WTC11 (cell line): ENCODE measurements at regions of chr16 and their contacts with region 1.

Region 1: GRCh38 chr16:56317998-56318826 is 107.1 kb downstream of the AMFR start:
- DNase-seq: peak; percentile 88
- ATAC-seq: peak; percentile 98
- H3K4me3 Mint-ChIP-seq: peak overlapping the region; percentile 64
- H3K27ac Mint-ChIP-seq: no peak overlapping the region
- H3K4me1 Mint-ChIP-seq: peaks cover 5% of the 10 kb centered on the region
- H3K27me3 Mint-ChIP-seq: peaks cover 9% of the 10 kb centered on the region
- CTCF ChIP-seq: peak; percentile 96

Region 2: GRCh38 chr16:55944377-55944802 is 373.8 kb before region 1 on chr16:
- CTCF ChIA-PET with region 1: interaction called, 10 read pairs
- POLR2A ChIA-PET with region 1: no interaction called
- DNase-seq: peak; percentile 80
- ATAC-seq: peak; percentile 97
- H3K4me3 Mint-ChIP-seq: no peak overlapping the region
- H3K27ac Mint-ChIP-seq: no peak overlapping the region
- H3K4me1 Mint-ChIP-seq: peaks cover 22% of the 10 kb centered on the region
- H3K27me3 Mint-ChIP-seq: no peaks in the 10 kb centered on the region; the same call in none of the 2 replicates
- CTCF ChIP-seq: peak; percentile 88

Region 3: DNA sequence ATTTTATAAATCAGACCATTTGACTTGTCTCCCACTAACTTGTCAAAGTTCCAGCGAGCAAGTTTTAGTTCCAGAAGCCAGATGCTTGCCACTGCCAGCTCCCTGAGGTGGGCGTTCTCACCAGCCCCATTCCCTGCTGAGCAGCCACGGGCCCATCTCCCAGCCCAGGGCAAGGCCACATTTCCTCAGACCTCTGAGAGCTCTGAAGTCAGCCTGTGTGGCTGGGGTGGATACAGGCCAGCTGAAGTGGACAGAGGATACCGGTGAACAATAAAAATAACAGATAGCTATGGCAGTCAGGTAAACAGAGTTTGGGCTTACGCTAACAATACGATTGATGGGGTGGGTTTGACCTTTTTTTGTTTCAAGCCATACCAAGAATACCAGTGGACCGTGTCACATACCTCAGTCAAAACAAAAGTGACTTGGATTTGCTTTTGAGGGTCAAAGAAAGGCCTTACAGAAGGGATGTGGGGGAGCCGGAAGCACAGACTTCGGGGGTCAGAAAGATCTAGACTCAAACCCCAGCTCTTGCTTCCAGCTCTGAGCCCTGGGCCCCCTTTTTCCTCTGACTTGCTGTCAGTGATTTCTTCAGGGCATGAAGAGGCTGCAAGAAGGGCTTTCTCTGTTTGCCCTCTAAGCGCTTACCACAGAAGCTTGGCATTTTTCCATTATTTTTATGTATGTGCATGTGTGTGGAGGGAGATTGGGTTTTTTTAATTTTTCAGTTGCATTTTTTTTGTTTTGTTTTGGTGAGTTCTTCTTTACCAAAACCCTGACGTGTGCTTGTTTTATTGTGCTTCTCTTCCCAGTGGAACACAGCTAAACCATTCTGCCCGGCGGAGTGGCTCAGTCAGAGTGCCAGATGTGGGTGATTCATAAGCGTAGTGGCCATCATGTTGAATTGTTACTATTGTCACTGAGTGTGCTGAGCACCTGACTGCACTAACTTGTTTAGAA is 17.0 kb before region 1 on chr16:
- CTCF ChIA-PET with region 1: interaction called, 33 read pairs
- POLR2A ChIA-PET with region 1: no interaction called
- DNase-seq: no peak
- ATAC-seq: no peak
- H3K4me3 Mint-ChIP-seq: no peak overlapping the region
- H3K27ac Mint-ChIP-seq: no peak overlapping the region
- H3K4me1 Mint-ChIP-seq: peaks cover 28% of the 10 kb centered on the region
- H3K27me3 Mint-ChIP-seq: peaks cover 10% of the 10 kb centered on the region
- CTCF ChIP-seq: no peak

Region 4: GRCh38 chr16:56341656-56342399 is 23.6 kb after region 1 on chr16:
- CTCF ChIA-PET with region 1: interaction called, 10 read pairs
- POLR2A ChIA-PET with region 1: interaction called, 3 read pairs
- DNase-seq: no peak
- ATAC-seq: no peak
- H3K4me3 Mint-ChIP-seq: no peak overlapping the region
- H3K27ac Mint-ChIP-seq: no peak overlapping the region
- H3K4me1 Mint-ChIP-seq: no peaks in the 10 kb centered on the region
- H3K27me3 Mint-ChIP-seq: no peaks in the 10 kb centered on the region
- CTCF ChIP-seq: no peak